Activated CD4-positive, alpha-beta memory T cell treated with anti-CD3 and anti-CD28 coated beads, Interleukin-2, amount 10 ng/mL, durations not matched to agents 7 days and 5 days (primary cell): ENCODE measurements at regions of chr13 and their contacts with region 1.

Region 1: DNA sequence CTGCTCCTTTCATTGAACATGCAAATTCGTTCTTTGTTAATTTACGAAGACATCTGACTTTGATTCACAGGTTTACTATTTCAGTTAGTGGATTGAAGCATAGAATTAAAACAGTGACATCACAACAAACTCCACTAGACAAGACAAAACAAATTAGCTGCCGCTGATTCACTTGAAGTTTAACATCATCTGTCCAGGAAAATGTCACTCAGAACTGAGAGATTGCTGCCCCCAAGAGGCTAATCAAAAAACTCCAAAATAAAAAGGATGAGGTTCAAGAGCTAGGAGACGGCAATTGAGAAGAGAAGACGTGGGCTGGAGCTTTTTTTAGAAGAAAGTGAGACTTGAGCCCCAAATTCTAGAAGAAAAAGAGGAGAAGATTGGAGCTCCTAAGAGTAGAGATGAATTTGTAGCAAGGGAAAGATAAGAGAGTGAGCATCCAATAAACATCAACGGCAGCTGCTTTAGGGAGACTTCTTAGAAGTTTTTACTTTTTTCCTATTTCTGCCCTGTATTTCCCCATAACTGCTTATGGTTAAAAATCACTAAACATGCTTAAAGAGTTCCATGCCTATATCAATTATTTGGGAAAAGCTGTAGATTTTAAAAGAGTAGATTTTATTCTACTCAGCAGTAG is 40.8 kb upstream of the TPP2 start:
- DNase-seq: no peak
- H3K4me3 Mint-ChIP-seq: no peak overlapping the region
- H3K27ac Mint-ChIP-seq: no peak overlapping the region
- H3K4me1 Mint-ChIP-seq: no peaks in the 10 kb centered on the region
- H3K27me3 Mint-ChIP-seq: peaks cover 6% of the 10 kb centered on the region

Region 2: GRCh38 chr13:102141625-102142472 is 414.2 kb before region 1 on chr13:
- CTCF ChIA-PET with region 1: interaction called, 14 read pairs
- POLR2A ChIA-PET with region 1: no interaction called
- DNase-seq: no peak
- H3K4me3 Mint-ChIP-seq: no peak overlapping the region
- H3K27ac Mint-ChIP-seq: no peak overlapping the region
- H3K4me1 Mint-ChIP-seq: no peaks in the 10 kb centered on the region
- H3K27me3 Mint-ChIP-seq: peaks cover 2% of the 10 kb centered on the region

Region 3: GRCh38 chr13:102517959-102518358 is 38.1 kb before region 1 on chr13:
- CTCF ChIA-PET with region 1: no interaction called
- POLR2A ChIA-PET with region 1: no interaction called
- DNase-seq: no peak
- H3K4me3 Mint-ChIP-seq: no peak overlapping the region
- H3K27ac Mint-ChIP-seq: no peak overlapping the region
- H3K4me1 Mint-ChIP-seq: no peaks in the 10 kb centered on the region
- H3K27me3 Mint-ChIP-seq: peaks cover 5% of the 10 kb centered on the region

Region 4: DNA sequence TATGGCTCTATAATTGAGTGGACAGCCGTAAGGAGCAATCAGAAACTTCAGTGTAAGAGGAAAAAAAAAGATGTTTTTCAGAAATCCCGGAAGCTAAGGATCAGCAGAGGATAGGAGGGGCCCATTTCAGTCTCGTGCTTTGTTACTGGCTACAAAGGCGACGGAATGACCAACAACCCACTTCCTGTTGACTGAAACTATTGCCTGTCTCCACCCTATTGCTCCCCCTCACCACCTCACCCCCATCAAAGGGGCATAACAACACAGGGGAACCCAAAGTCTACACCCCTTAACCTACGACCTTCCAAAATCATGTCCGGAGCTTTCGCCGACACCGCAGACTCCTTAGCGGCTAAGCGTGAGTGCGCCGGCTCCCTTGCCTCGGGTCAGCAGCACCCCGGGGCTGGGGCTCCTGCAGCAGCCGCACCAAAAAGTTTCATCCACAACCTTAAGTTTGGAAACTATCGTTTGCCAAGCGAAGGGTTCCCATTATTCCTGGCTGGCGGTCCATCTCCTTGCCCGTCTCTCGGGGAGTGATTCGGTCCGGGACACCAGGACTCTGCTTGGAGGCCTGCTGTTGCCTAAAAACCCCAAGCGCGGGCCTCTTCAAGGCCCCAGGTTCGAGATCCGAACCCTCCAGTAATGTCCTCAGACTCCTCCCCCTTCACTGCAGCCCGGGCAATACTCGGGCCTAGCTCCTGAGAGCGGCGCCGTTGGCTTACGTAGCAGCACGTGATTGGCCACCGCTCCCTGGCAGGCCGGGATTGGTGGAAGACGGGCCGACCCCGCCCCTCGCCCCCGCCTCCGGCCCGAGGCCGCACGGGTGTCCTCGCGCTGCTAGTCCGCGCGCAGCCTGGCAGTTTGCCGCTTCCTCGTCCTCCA is 40.4 kb after region 1 on chr13 and contains the start of gene TPP2:
- CTCF ChIA-PET with region 1: no interaction called
- POLR2A ChIA-PET with region 1: no interaction called
- DNase-seq: peak; percentile 99
- H3K4me3 Mint-ChIP-seq: peak within 1 kb of the TSS; percentile 97
- H3K27ac Mint-ChIP-seq: peak within 1 kb of the TSS; percentile 100
- H3K4me1 Mint-ChIP-seq: peaks cover 64% of the 10 kb centered on the region
- H3K27me3 Mint-ChIP-seq: no peaks in the 10 kb centered on the region
- total RNA-seq, gene TPP2: 86.2 to 96.8 TPM

Region 5: GRCh38 chr13:102757006-102757405 is 201.0 kb after region 1 on chr13:
- CTCF ChIA-PET with region 1: no interaction called
- POLR2A ChIA-PET with region 1: no interaction called
- DNase-seq: no peak
- H3K4me3 Mint-ChIP-seq: no peak overlapping the region
- H3K27ac Mint-ChIP-seq: no peak overlapping the region
- H3K4me1 Mint-ChIP-seq: no peaks in the 10 kb centered on the region
- H3K27me3 Mint-ChIP-seq: no peaks in the 10 kb centered on the region